ENCODE measurements at regions of chr9 and their contacts with region 1.

Region 1: GRCh38 chr9:89549031-89549644 is 51.2 kb upstream of the SEMA4D start:
- DNase-seq: peak; percentile 29 to 90
- H3K4me3 ChIP-seq: no peak overlapping the region
- H3K27ac ChIP-seq: no peak overlapping the region
- H3K4me1 ChIP-seq: peaks cover 0 to 11% (median 7%) of the 10 kb centered on the region in 4 experiments; a peak in 5 of 7 replicates
- H3K27me3 ChIP-seq: no peaks in the 10 kb centered on the region
- CTCF ChIP-seq: peak; percentile 81 to 97 (median 93)
- EP300 ChIP-seq: no peak
- POLR2A ChIP-seq: no peak
- RAD21 ChIP-seq: peak; percentile 84 to 85

Region 2: DNA sequence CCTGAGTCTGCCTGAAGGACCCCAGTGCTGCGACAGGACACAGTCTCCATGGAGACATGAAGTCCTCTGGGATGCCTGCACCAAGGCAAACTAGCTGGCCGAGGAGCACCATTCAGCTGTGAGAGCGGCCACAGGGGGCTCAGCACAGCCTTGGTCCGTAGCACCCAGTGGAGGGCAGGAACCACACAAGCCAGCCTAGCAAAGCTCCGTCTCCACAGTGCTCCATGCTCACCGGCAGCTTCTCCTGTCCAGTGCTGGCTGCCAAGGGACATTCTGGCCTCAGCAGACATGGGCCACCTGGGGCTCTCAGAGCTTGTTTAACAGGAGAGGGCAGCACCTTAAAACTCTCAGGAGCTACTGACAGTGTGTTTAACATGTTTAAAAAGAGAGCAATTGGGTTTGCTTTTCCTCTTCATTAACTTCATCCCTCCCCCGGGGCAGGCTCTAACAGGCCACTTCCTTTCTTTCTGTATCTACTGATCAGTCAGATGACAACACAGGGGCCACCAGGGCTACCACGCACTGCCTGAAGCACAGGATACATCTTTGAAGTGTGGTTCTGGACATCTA is 173.9 kb before region 1 on chr9:
- CTCF ChIA-PET with region 1: interaction called, 11 read pairs
- POLR2A ChIA-PET with region 1: interaction called, 5 read pairs
- DNase-seq: no peak
- H3K4me3 ChIP-seq: no peak overlapping the region
- H3K27ac ChIP-seq: no peak overlapping the region
- H3K4me1 ChIP-seq: no peaks in the 10 kb centered on the region
- H3K27me3 ChIP-seq: no peaks in the 10 kb centered on the region
- CTCF ChIP-seq: no peak
- EP300 ChIP-seq: no peak
- POLR2A ChIP-seq: no peak
- RAD21 ChIP-seq: no peak

Region 3: GRCh38 chr9:89461265-89461664 is 87.9 kb before region 1 on chr9:
- CTCF ChIA-PET with region 1: interaction called, 13 read pairs
- POLR2A ChIA-PET with region 1: no interaction called
- DNase-seq: no peak
- H3K4me3 ChIP-seq: no peak overlapping the region
- H3K27ac ChIP-seq: no peak overlapping the region
- H3K4me1 ChIP-seq: peaks cover 18 to 40% (median 23%) of the 10 kb centered on the region in 4 experiments
- H3K27me3 ChIP-seq: no peaks in the 10 kb centered on the region
- CTCF ChIP-seq: no peak
- EP300 ChIP-seq: no peak
- POLR2A ChIP-seq: no peak
- RAD21 ChIP-seq: no peak

Region 4: GRCh38 chr9:89529243-89530035 is 19.7 kb before region 1 on chr9:
- CTCF ChIA-PET with region 1: interaction called, 28 read pairs
- POLR2A ChIA-PET with region 1: interaction called, 4 read pairs
- DNase-seq: no peak
- H3K4me3 ChIP-seq: no peak overlapping the region
- H3K27ac ChIP-seq: no peak overlapping the region
- H3K4me1 ChIP-seq: no peaks in the 10 kb centered on the region; a peak in 1 of 7 replicates
- H3K27me3 ChIP-seq: no peaks in the 10 kb centered on the region; a peak in 1 of 7 replicates
- CTCF ChIP-seq: no peak
- EP300 ChIP-seq: no peak
- POLR2A ChIP-seq: no peak
- RAD21 ChIP-seq: no peak

Region 5: GRCh38 chr9:89564352-89564878 is 15.3 kb after region 1 on chr9:
- CTCF ChIA-PET with region 1: interaction called, 99 read pairs
- POLR2A ChIA-PET with region 1: interaction called, 3 read pairs
- DNase-seq: peak; percentile 46 to 68
- H3K4me3 ChIP-seq: no peak overlapping the region
- H3K27ac ChIP-seq: no peak overlapping the region
- H3K4me1 ChIP-seq: peaks cover 0 to 3% (median 1%) of the 10 kb centered on the region in 4 experiments; a peak in 3 of 7 replicates
- H3K27me3 ChIP-seq: no peaks in the 10 kb centered on the region
- CTCF ChIP-seq: peak; percentile 54 to 82 (median 71)
- EP300 ChIP-seq: no peak
- POLR2A ChIP-seq: no peak
- RAD21 ChIP-seq: peak; percentile 38 to 53

Region 6: DNA sequence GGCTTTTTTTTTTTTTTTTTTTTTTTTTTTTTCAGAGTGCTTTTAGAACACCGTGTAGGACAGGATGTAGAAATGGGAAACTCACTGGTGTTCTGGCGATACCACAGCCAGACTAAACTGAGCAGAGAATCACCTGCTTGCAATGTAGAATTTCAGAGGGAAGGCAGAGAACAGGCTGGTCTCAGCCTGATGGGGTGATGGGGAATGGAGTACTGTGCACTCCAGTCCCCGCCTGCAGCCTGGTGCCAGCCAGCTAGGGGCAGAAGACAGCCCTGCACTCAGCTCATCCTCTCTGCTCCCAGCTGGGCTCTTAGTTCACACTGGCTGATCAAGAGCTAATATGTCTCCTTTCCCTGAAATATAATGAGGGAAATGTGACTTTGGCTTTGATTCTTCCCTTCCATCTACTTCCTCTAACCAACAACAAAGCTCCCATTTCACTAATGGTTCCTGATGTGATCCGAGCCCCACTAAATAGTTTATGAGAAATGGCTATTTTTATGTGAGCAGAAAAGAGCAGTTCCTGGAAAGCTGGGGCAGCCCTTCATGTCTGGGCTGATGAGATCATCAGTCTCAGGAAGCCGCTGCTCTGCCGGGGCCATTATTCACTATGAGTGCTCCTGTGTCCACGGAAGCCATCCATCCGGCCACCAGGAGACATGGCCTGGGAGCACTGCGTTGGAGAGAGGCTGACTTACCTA is 265.4 kb after region 1 on chr9:
- CTCF ChIA-PET with region 1: no interaction called
- POLR2A ChIA-PET with region 1: no interaction called
- DNase-seq: no peak
- H3K4me3 ChIP-seq: no peak overlapping the region
- H3K27ac ChIP-seq: no peak overlapping the region
- H3K4me1 ChIP-seq: no peaks in the 10 kb centered on the region; a peak in 1 of 7 replicates
- H3K27me3 ChIP-seq: peaks cover 0 to 2% (median 0%) of the 10 kb centered on the region in 4 experiments; a peak in 1 of 7 replicates
- CTCF ChIP-seq: peak in 1 of 3 experiments; percentile 25; a peak in 1 of 4 replicates
- EP300 ChIP-seq: no peak
- POLR2A ChIP-seq: no peak
- RAD21 ChIP-seq: peak in 1 of 2 experiments; percentile 20; a peak in 1 of 4 replicates

Measured in H1 (cell line).